Heart left ventricle (tissue), 16 donors: ENCODE measurements at regions of chr2 and their contacts with region 1.

Region 1: DNA sequence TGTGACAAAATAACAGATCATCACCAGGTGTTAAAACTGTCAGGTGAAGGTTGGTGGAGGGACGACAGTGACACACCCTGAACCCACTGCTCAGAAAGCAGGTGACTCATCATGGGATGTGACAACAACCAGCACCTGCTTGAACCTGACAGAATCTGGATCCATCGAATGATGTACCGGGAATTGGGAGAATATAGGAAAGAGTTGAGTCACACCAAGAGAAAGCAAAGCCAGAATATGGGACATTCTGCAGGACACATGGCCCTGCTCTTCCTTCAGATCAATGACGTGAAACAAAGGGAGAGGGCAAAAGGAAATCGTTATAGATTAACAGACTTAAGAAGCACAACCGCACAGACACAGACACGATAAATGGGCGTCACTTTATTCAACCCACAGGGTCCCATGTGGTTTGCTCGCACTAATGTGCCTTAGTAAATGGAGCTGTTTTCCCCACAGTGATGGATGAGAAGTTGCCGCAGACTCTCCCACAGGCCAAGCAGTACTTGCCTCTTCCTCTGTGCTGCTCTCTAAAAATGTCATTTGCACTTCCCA is 100.1 kb downstream of the CRACDL start:
- DNase-seq: no peak
- ATAC-seq: no peak
- H3K4me3 ChIP-seq: no peak overlapping the region
- H3K27ac ChIP-seq: peak overlapping the region in 1 of 12 donors; percentile 34
- H3K4me1 ChIP-seq: peaks cover 0 to 24% (median 11%) of the 10 kb centered on the region in 12 donors
- H3K27me3 ChIP-seq: no peaks in the 10 kb centered on the region
- CTCF ChIP-seq: no peak
- POLR2A ChIP-seq: no peak

Region 2: GRCh38 chr2:98649135-98649991 is 186.5 kb before region 1 on chr2:
- intact Hi-C with region 1: loop called (anchors 1 to 2 kb)
- DNase-seq: peak in 4 of 5 donors; percentile 71 to 74 (median 72)
- ATAC-seq: peak; percentile 61 to 94 (median 92)
- H3K4me3 ChIP-seq: no peak overlapping the region
- H3K27ac ChIP-seq: peak overlapping the region in 1 of 12 donors; percentile 29
- H3K4me1 ChIP-seq: peaks cover 0 to 27% (median 0%) of the 10 kb centered on the region in 12 donors
- H3K27me3 ChIP-seq: no peaks in the 10 kb centered on the region
- CTCF ChIP-seq: peak; percentile 97 to 100 (median 98)
- POLR2A ChIP-seq: no peak